Naive thymus-derived CD4-positive, alpha-beta T cell (primary cell): ENCODE measurements at regions of chr1 and their contacts with region 1.

Region 1: GRCh38 chr1:241531195-241532161 is 700 bp upstream of the KMO start:
- DNase-seq: peak in 7 of 9 donors; percentile 34 to 77 (median 67)
- ATAC-seq: peak; percentile 92
- H3K4me3 ChIP-seq: peak overlapping the region; percentile 71
- H3K4me3 Mint-ChIP-seq: peak overlapping the region; percentile 86 to 99 (median 92)
- H3K27ac ChIP-seq: peak overlapping the region; percentile 54
- H3K27ac Mint-ChIP-seq: peak overlapping the region; percentile 49 to 93 (median 83)
- H3K4me1 ChIP-seq: peaks cover 4 to 6% of the 10 kb centered on the region in 2 donors
- H3K4me1 Mint-ChIP-seq: peaks cover 8 to 16% (median 13%) of the 10 kb centered on the region in 7 donors
- H3K27me3 ChIP-seq: no peaks in the 10 kb centered on the region
- H3K27me3 Mint-ChIP-seq: peaks cover 0 to 37% (median 0%) of the 10 kb centered on the region in 5 donors

Region 2: GRCh38 chr1:240687838-240688237 is 843.6 kb before region 1 on chr1:
- CTCF ChIA-PET with region 1: no interaction called
- POLR2A ChIA-PET with region 1: no interaction called
- intact Hi-C with region 1: no loop called
- DNase-seq: peak in 5 of 9 donors; percentile 3 to 20 (median 10)
- ATAC-seq: peak; percentile 63
- H3K4me3 ChIP-seq: no peak overlapping the region
- H3K4me3 Mint-ChIP-seq: peak overlapping the region in 5 of 10 donors; percentile 12 to 50 (median 23)
- H3K27ac ChIP-seq: no peak overlapping the region
- H3K27ac Mint-ChIP-seq: peak overlapping the region in 8 of 9 donors; percentile 42 to 89 (median 71)
- H3K4me1 ChIP-seq: no peaks in the 10 kb centered on the region
- H3K4me1 Mint-ChIP-seq: peaks cover 2 to 13% (median 9%) of the 10 kb centered on the region in 7 donors
- H3K27me3 ChIP-seq: no peaks in the 10 kb centered on the region
- H3K27me3 Mint-ChIP-seq: peaks cover 0 to 4% (median 0%) of the 10 kb centered on the region in 5 donors

Region 3: DNA sequence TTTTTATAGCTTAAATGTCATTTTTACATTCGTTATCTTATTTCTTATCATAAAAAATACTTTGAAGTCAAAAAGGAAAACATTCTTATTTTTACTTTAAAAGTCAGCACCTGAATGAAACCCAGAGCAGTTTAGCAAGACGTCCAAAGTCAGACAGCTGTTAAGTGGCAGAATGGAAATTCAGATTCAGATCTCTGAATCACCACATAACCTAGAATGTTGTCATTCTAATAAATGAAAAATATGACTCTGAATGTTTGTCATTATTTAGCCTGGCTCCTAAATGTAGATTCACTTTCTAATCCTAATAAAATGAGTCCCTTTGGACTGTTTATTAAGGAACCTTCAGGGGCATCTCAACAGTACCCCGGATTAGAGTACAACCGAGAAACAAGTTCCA is 99.2 kb before region 1 on chr1:
- CTCF ChIA-PET with region 1: no interaction called
- POLR2A ChIA-PET with region 1: no interaction called
- intact Hi-C with region 1: no loop called
- DNase-seq: no peak
- ATAC-seq: no peak
- H3K4me3 ChIP-seq: no peak overlapping the region
- H3K4me3 Mint-ChIP-seq: no peak overlapping the region
- H3K27ac ChIP-seq: no peak overlapping the region
- H3K27ac Mint-ChIP-seq: no peak overlapping the region
- H3K4me1 ChIP-seq: no peaks in the 10 kb centered on the region
- H3K4me1 Mint-ChIP-seq: no peaks in the 10 kb centered on the region
- H3K27me3 ChIP-seq: no peaks in the 10 kb centered on the region
- H3K27me3 Mint-ChIP-seq: peaks cover 14 to 64% (median 34%) of the 10 kb centered on the region in 5 donors

Region 4: DNA sequence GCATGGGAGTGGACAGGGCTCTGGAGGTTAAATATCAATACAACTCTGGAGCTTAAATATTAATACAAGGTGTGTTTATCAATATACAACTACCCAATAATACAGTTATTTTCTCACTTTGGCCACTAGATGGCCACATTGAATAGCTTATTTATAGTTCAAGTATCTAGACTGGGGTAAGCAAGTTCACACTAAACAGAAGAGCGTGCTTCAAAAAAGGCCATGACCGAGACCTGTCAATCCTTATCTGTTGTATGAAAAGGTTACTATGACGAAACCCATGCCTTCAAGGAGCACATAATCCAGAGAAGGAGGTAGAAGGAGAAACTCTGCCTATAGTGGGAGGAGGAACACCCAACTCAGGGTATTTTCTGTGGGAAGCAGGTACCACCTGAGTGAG is 79.6 kb after region 1 on chr1:
- CTCF ChIA-PET with region 1: interaction called, 7 read pairs
- POLR2A ChIA-PET with region 1: no interaction called
- intact Hi-C with region 1: loop called (anchors 2 to 5 kb)
- DNase-seq: peak in 7 of 9 donors; percentile 34 to 72 (median 59)
- ATAC-seq: peak; percentile 87
- H3K4me3 ChIP-seq: no peak overlapping the region
- H3K4me3 Mint-ChIP-seq: no peak overlapping the region
- H3K27ac ChIP-seq: no peak overlapping the region
- H3K27ac Mint-ChIP-seq: no peak overlapping the region
- H3K4me1 ChIP-seq: peaks cover 0 to 3% of the 10 kb centered on the region in 2 donors
- H3K4me1 Mint-ChIP-seq: peaks cover 0 to 6% (median 0%) of the 10 kb centered on the region in 7 donors
- H3K27me3 ChIP-seq: no peaks in the 10 kb centered on the region
- H3K27me3 Mint-ChIP-seq: no peaks in the 10 kb centered on the region

Region 5: DNA sequence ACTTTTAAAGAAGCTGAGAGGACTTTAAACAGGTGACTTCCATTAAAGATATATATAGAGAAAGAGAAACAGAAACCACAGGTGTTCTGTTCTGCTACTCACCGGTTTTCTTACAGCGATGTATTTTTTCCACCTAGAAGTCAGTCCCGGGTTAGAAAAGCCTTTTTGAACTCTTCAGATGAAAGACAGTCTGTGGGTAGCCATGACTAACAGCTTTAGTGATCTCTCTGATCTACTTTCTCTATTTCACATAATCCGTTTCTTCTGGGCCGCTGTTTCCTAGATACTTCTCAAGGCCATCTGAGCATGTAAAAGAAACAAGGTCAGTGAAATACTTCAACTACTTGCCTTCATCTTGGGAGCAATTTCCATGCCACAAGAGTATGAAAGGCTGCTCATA is 145.7 kb after region 1 on chr1:
- CTCF ChIA-PET with region 1: no interaction called
- POLR2A ChIA-PET with region 1: no interaction called
- intact Hi-C with region 1: loop called in 1 of 2 experiments (anchors 1 kb)
- DNase-seq: peak in 8 of 9 donors; percentile 23 to 83 (median 75)
- ATAC-seq: peak; percentile 97
- H3K4me3 ChIP-seq: peak overlapping the region; percentile 28
- H3K4me3 Mint-ChIP-seq: peak overlapping the region; percentile 53 to 88 (median 76)
- H3K27ac ChIP-seq: peak overlapping the region; percentile 55
- H3K27ac Mint-ChIP-seq: peak overlapping the region; percentile 85 to 97 (median 90)
- H3K4me1 ChIP-seq: peaks cover 8 to 21% of the 10 kb centered on the region in 2 donors
- H3K4me1 Mint-ChIP-seq: peaks cover 4 to 30% (median 20%) of the 10 kb centered on the region in 7 donors
- H3K27me3 ChIP-seq: no peaks in the 10 kb centered on the region
- H3K27me3 Mint-ChIP-seq: peaks cover 0 to 6% (median 0%) of the 10 kb centered on the region in 5 donors

Region 6: GRCh38 chr1:241716915-241717656 is 185.6 kb after region 1 on chr1:
- CTCF ChIA-PET with region 1: no interaction called
- POLR2A ChIA-PET with region 1: no interaction called
- intact Hi-C with region 1: no loop called
- DNase-seq: peak in 4 of 9 donors; percentile 15 to 36 (median 16)
- ATAC-seq: peak; percentile 46
- H3K4me3 ChIP-seq: no peak overlapping the region
- H3K4me3 Mint-ChIP-seq: peak overlapping the region in 2 of 10 donors; percentile 7 to 45
- H3K27ac ChIP-seq: no peak overlapping the region
- H3K27ac Mint-ChIP-seq: peak overlapping the region in 1 of 9 donors; percentile 19
- H3K4me1 ChIP-seq: no peaks in the 10 kb centered on the region
- H3K4me1 Mint-ChIP-seq: peaks cover 0 to 20% (median 14%) of the 10 kb centered on the region in 7 donors
- H3K27me3 ChIP-seq: no peaks in the 10 kb centered on the region
- H3K27me3 Mint-ChIP-seq: peaks cover 0 to 18% (median 4%) of the 10 kb centered on the region in 5 donors

Region 7: GRCh38 chr1:241847796-241848685 is 316.6 kb after region 1 on chr1 and contains the start of gene EXO1:
- CTCF ChIA-PET with region 1: no interaction called
- POLR2A ChIA-PET with region 1: no interaction called
- intact Hi-C with region 1: loop called (anchors 1 kb)
- DNase-seq: peak; percentile 84 to 92 (median 89)
- ATAC-seq: peak; percentile 99
- H3K4me3 ChIP-seq: peak within 1 kb of the TSS; percentile 96
- H3K4me3 Mint-ChIP-seq: peak within 1 kb of the TSS; percentile 87 to 99 (median 96)
- H3K27ac ChIP-seq: peak within 1 kb of the TSS; percentile 96
- H3K27ac Mint-ChIP-seq: peak within 1 kb of the TSS; percentile 95 to 99 (median 99)
- H3K4me1 ChIP-seq: peaks cover 6 to 12% of the 10 kb centered on the region in 2 donors
- H3K4me1 Mint-ChIP-seq: peaks cover 7 to 42% (median 17%) of the 10 kb centered on the region in 7 donors
- H3K27me3 ChIP-seq: no peaks in the 10 kb centered on the region
- H3K27me3 Mint-ChIP-seq: peaks cover 0 to 8% (median 0%) of the 10 kb centered on the region in 5 donors
- total RNA-seq, gene EXO1: 0.11 to 29.8 (median 1.0) TPM

Region 8: DNA sequence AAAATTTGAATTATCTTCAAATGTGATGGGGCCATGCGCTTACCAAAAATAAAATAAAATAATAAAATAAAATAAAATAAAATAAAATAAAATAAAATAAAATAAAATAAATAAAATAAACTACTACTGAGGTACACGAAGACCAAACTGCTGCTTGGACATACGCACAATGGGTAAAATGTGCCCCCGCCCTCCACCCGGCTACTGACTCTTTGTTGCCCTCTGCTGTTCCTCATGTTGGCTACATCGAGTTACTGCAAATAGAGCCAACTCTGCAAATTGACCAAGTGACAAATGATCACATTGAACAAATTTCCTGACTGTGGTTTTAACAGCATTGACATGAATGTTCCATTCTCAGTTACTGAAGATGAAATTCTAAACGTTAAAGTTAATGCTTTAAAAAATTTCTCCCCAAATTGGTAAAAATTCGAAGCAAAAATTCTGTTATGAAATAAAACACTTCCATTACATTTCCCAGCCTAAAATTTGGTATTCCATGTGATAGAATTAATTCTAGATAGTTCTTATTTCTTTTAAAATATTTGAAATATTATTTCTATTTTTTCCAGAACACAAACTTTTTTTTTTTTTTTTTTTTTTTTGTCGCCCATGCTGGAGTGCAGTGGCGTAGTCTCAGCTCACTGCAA is 486.2 kb after region 1 on chr1:
- CTCF ChIA-PET with region 1: no interaction called
- POLR2A ChIA-PET with region 1: no interaction called
- intact Hi-C with region 1: loop called (anchors 1 kb)
- DNase-seq: peak in 6 of 9 donors; percentile 6 to 34 (median 14)
- ATAC-seq: peak; percentile 64
- H3K4me3 ChIP-seq: no peak overlapping the region
- H3K4me3 Mint-ChIP-seq: no peak overlapping the region
- H3K27ac ChIP-seq: no peak overlapping the region
- H3K27ac Mint-ChIP-seq: no peak overlapping the region
- H3K4me1 ChIP-seq: no peaks in the 10 kb centered on the region
- H3K4me1 Mint-ChIP-seq: no peaks in the 10 kb centered on the region
- H3K27me3 ChIP-seq: no peaks in the 10 kb centered on the region
- H3K27me3 Mint-ChIP-seq: no peaks in the 10 kb centered on the region